ENCODE measurements at regions of chr10 and their contacts with region 1.

Region 1: DNA sequence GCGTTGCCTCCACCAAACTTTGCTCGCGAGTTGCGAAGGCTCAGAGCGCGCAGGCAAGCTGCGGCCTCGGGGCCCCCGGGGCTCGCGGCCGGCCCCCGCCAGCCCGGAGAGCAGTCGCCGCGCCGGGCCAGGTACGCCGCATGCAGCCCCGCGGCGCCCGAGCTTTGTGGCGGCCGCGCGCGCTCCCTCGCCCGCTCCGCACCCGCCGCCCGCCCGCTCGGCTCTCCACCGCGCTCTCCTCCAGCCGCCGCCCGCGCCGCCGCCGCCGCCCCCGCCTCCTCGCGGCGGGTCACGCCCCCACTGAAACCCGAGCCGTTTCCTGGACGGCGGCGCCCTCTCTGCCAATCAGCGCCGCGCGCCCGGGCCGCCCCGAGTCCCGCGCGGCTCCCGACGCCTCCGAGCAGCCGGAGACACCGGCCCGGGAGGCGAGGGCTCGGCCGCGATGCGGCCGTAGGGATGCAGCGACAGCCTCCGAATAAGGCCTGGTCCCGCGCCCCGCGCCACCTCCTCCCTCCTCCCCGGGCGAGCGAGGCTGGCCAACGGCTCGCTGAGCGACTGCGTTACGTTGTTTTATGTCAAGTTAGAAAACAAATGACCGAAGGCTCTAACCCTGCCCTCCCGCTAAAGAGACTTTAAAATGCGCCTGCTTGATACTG is at the start of gene FGFR2:
- DNase-seq: no peak
- ATAC-seq: peak; percentile 94
- H3K4me3 ChIP-seq: peak within 1 kb of the TSS; percentile 55 to 61
- H3K27ac ChIP-seq: peak within 1 kb of the TSS; percentile 76
- H3K4me1 ChIP-seq: peaks cover 6% of the 10 kb centered on the region
- H3K27me3 ChIP-seq: peaks cover 18% of the 10 kb centered on the region
- CTCF ChIP-seq: no peak
- total RNA-seq, gene FGFR2: 5.7 TPM

Region 2: DNA sequence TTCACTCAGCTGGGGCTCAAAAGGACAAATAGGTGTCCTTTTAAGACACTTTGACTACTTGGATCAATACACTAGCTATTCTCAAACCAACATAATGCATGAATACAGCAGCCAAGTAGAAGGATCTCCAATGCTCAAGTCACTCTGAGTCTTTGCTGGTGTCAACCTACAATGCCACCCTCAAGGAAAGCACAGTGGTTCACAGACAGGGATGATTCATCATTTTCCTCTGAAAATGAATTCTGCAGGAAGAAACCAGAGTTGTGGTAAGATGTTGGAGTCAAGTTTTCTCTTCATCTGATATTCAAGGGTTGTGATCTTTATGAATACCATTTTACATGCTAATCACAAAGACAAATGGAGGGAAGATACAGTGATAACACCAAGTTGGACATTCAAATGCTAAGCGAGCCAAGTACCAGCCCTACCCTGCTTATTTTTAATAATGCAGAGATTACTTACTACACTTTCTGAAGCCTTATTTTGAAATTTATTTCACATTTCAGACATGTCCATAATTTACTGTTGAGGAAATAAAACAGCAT is 143.0 kb after region 1 on chr10:
- CTCF ChIA-PET with region 1: no interaction called
- POLR2A ChIA-PET with region 1: interaction called, 10 read pairs
- in situ Hi-C with region 1: no loop called
- intact Hi-C with region 1: no loop called
- DNase-seq: no peak
- ATAC-seq: no peak
- H3K4me3 ChIP-seq: no peak overlapping the region
- H3K27ac ChIP-seq: no peak overlapping the region
- H3K4me1 ChIP-seq: no peaks in the 10 kb centered on the region
- H3K27me3 ChIP-seq: peaks cover 6% of the 10 kb centered on the region
- CTCF ChIP-seq: no peak